Lower lobe of right lung (tissue), 2 donors: ENCODE measurements at regions of chrX and their contacts with region 1.

Region 1: DNA sequence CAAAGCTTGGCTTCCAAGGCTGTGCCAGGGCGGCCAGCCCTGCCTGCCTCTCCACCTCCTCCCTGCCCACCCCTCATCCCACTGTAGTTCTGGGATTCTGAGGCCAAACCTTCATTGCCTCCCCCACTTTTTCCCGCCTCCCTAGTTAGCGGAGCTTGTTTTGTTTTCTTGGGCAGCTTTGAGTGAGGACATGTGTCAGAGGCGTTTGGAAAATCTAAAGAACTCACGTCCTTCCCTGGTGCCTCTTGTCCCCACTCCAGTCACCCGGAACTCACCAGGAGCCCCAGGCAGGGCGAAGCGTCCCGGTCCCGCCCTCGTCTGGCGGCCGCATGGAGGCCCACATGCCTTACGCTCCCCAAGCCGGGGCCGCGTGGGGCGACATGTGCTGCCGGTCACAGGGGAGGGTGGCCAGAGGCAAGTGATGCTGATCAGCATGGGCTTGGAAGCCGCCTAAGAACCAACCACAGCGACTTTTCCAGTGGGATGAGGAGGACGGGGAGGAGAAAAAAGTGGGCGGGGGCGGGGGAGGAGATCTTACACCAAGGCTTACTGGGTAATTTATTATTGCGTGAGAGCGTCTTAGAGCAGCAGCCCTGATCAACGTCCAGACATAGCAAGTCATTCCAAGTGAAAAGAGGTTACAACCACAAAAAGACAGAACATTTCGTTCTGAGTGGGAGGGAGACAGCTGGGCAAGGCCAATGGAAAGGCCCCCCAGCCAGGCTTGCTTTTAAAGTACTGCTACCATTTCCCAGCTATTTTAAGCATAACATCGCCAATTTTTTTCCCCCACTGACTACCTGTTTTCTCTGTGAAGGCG is 48.5 kb downstream of the PRPS1 start:
- DNase-seq: peak; percentile 93
- ATAC-seq: peak; percentile 71 to 78
- H3K4me3 ChIP-seq: peak overlapping the region; percentile 55
- H3K27ac ChIP-seq: peak overlapping the region; percentile 98
- H3K4me1 ChIP-seq: peaks cover 55% of the 10 kb centered on the region
- H3K27me3 ChIP-seq: no peaks in the 10 kb centered on the region
- CTCF ChIP-seq: no peak

Region 2: GRCh38 chrX:107602694-107603239 is 74.0 kb before region 1 on chrX:
- intact Hi-C with region 1: no loop called
- DNase-seq: no peak
- ATAC-seq: no peak
- H3K4me3 ChIP-seq: no peak overlapping the region
- H3K27ac ChIP-seq: no peak overlapping the region
- H3K4me1 ChIP-seq: no peaks in the 10 kb centered on the region
- H3K27me3 ChIP-seq: no peaks in the 10 kb centered on the region
- CTCF ChIP-seq: no peak

Region 3: DNA sequence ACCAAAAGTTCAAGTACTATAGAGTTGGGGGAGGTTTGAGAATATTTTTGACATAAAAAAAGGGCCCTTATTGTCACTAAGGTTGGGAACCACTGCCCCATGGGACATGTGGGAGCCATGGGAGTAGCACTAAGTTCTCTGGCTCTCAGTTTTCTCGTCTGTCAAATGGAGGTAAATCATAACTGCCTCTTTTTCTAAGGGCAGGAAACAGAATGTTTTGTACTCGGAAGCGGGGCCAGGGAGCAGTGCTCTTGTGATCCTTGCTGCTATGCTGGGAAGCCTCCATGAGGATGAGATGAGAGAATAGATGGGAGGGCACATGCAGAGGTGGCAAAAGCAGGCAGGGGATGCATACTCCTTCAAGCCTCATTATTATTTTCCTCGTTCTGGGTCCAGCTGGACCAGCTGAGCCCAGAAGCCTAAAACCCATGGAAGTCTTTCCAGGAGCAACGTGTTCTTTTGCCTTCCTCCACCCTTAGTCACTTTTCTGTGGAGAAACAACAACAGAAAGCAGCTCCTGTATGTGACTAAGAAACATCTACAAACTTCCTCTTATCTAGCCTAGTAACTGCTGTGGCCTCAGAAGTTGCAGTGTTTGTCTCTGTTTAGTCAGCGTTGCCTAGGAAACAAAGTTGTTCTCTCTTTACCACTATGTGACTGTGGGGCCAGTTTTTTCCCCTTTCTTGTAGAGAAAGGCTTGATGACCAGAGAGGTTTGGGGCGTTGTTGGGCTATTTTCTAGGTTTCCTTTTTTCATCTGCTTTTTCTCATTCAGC is 34.0 kb after region 1 on chrX:
- intact Hi-C with region 1: loop called (anchors 5 kb)
- DNase-seq: no peak
- ATAC-seq: peak; percentile 73 to 80
- H3K4me3 ChIP-seq: no peak overlapping the region
- H3K27ac ChIP-seq: peak overlapping the region; percentile 99
- H3K4me1 ChIP-seq: peaks cover 34% of the 10 kb centered on the region
- H3K27me3 ChIP-seq: no peaks in the 10 kb centered on the region
- CTCF ChIP-seq: no peak